Esophagus muscularis mucosa (tissue), 4 donors: ENCODE measurements at regions of chr7 and their contacts with region 1.

Region 1: GRCh38 chr7:80659120-80660055 is 20.9 kb downstream of the CD36 start:
- DNase-seq: no peak
- H3K4me3 ChIP-seq: no peak overlapping the region
- H3K27ac ChIP-seq: no peak overlapping the region
- H3K4me1 ChIP-seq: peaks cover 0 to 21% (median 0%) of the 10 kb centered on the region in 4 donors
- H3K27me3 ChIP-seq: no peaks in the 10 kb centered on the region
- CTCF ChIP-seq: peak; percentile 71 to 82 (median 80)
- EP300 ChIP-seq: no peak
- POLR2A ChIP-seq: no peak

Region 2: GRCh38 chr7:80428161-80429054 is 231.0 kb before region 1 on chr7:
- intact Hi-C with region 1: loop called (anchors 5 kb)
- DNase-seq: no peak
- H3K4me3 ChIP-seq: no peak overlapping the region
- H3K27ac ChIP-seq: no peak overlapping the region
- H3K4me1 ChIP-seq: peaks cover 0 to 3% (median 0%) of the 10 kb centered on the region in 4 donors
- H3K27me3 ChIP-seq: no peaks in the 10 kb centered on the region
- CTCF ChIP-seq: peak; percentile 45 to 55 (median 51)
- EP300 ChIP-seq: no peak
- POLR2A ChIP-seq: no peak

Region 3: GRCh38 chr7:80722616-80723141 is 63.3 kb after region 1 on chr7:
- intact Hi-C with region 1: no loop called
- DNase-seq: peak; percentile 92
- H3K4me3 ChIP-seq: no peak overlapping the region
- H3K27ac ChIP-seq: peak overlapping the region; percentile 69 to 85 (median 84)
- H3K4me1 ChIP-seq: peaks cover 7 to 44% (median 42%) of the 10 kb centered on the region in 4 donors
- H3K27me3 ChIP-seq: no peaks in the 10 kb centered on the region
- CTCF ChIP-seq: no peak
- EP300 ChIP-seq: no peak
- POLR2A ChIP-seq: no peak

Region 4: DNA sequence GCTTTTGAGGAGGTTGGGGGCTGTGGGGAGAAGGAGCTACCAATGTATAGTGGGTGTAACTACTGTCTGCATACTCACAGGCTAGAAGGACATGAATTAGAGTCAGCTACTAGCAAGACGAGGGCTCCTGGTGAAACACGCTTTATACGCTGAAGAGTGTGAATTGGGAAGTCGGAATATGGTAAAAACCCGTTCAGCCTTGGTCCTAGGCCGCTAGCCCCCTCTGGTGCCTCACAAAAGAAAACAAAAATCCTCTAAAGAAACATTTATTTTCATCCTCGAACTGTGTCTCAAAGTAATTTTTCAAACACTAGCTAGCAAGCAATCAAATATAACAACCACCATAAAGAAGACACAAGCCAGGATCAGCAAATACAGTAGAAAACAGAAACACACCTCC is 597.6 kb after region 1 on chr7:
- intact Hi-C with region 1: no loop called
- DNase-seq: no peak
- H3K4me3 ChIP-seq: no peak overlapping the region
- H3K27ac ChIP-seq: no peak overlapping the region
- H3K4me1 ChIP-seq: no peaks in the 10 kb centered on the region
- H3K27me3 ChIP-seq: no peaks in the 10 kb centered on the region
- CTCF ChIP-seq: peak; percentile 26 to 46 (median 27)
- EP300 ChIP-seq: no peak
- POLR2A ChIP-seq: no peak